HepG2 (cell line): ENCODE measurements at regions of chr2 and their contacts with region 1.

Region 1: DNA sequence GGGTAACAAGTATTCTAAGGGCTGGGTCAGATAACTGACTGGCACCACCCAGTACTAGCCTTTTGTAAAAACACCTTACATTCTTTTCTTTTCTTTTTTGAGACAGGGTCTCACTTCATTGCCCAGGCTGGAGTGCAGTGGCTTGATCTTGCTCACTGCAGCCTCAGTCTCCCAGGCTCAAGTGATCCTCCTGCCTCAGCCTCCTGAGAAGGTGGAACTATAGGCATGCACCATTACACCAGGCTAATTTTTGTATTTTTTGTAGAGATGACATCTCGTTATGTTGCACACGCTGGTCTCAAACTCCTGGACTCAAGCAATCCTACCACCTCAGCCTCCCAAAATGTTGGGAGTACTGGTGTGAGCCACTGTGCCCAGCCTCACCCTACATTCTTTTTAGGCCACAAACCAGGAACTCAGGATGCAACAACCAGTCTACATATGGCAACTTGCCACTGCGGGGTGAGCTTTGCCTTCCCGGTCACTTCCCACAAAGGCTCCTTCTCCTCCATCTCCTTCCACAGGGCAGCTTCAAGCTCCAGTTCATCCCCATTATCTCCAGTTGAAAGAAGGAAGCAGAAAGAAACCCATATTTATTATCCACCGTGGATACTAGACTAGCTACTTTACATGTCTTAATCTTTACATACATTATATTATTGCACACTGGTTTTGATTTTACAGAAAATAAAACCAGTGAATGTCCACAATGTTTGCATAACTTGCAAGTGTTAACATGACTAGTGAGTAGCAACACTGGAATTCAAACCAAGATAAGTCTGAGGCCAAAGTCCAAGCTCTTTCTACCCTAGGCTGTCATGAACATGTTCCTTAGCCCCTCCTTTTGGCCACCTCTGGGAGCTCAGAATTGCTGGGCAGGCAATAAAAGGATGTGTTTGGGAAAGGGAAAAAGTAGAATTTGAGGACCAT is 23.7 kb upstream of the AP1S3 start:
- DNase-seq: peak; percentile 97
- ATAC-seq: peak; percentile 90
- H3K4me3 ChIP-seq: no peak overlapping the region; a peak in 1 of 6 replicates
- H3K27ac ChIP-seq: peak overlapping the region; percentile 59
- H3K4me1 ChIP-seq: peaks cover 29% of the 10 kb centered on the region
- H3K27me3 ChIP-seq: no peaks in the 10 kb centered on the region
- CTCF ChIP-seq: peak; percentile 63
- EP300 ChIP-seq: peak; percentile 62 to 89; a peak in 3 of 4 replicates
- POLR2A ChIP-seq: no peak
- RAD21 ChIP-seq: no peak

Region 2: GRCh38 chr2:223674998-223675609 is 186.0 kb before region 1 on chr2:
- CTCF ChIA-PET with region 1: no interaction called
- POLR2A ChIA-PET with region 1: no interaction called
- in situ Hi-C with region 1: no loop called
- intact Hi-C with region 1: loop called (anchors 1 kb)
- DNase-seq: peak; percentile 30
- ATAC-seq: peak; percentile 96
- H3K4me3 ChIP-seq: no peak overlapping the region
- H3K27ac ChIP-seq: no peak overlapping the region
- H3K4me1 ChIP-seq: no peaks in the 10 kb centered on the region
- H3K27me3 ChIP-seq: no peaks in the 10 kb centered on the region
- CTCF ChIP-seq: peak; percentile 71
- EP300 ChIP-seq: no peak
- POLR2A ChIP-seq: no peak
- RAD21 ChIP-seq: no peak

Region 3: GRCh38 chr2:223692191-223692947 is 168.7 kb before region 1 on chr2:
- CTCF ChIA-PET with region 1: interaction called, 6 read pairs
- POLR2A ChIA-PET with region 1: no interaction called
- in situ Hi-C with region 1: no loop called
- intact Hi-C with region 1: loop called (anchors 1 kb)
- DNase-seq: peak; percentile 54
- ATAC-seq: peak; percentile 95
- H3K4me3 ChIP-seq: no peak overlapping the region
- H3K27ac ChIP-seq: no peak overlapping the region
- H3K4me1 ChIP-seq: peaks cover 16% of the 10 kb centered on the region; the same call in 1 of the 2 replicates
- H3K27me3 ChIP-seq: peaks cover 0 to 6% of the 10 kb centered on the region in 2 experiments; a peak in 2 of 5 replicates
- CTCF ChIP-seq: peak; percentile 85
- EP300 ChIP-seq: no peak
- POLR2A ChIP-seq: no peak
- RAD21 ChIP-seq: peak; percentile 61; the same call in 1 of the 2 replicates

Region 4: DNA sequence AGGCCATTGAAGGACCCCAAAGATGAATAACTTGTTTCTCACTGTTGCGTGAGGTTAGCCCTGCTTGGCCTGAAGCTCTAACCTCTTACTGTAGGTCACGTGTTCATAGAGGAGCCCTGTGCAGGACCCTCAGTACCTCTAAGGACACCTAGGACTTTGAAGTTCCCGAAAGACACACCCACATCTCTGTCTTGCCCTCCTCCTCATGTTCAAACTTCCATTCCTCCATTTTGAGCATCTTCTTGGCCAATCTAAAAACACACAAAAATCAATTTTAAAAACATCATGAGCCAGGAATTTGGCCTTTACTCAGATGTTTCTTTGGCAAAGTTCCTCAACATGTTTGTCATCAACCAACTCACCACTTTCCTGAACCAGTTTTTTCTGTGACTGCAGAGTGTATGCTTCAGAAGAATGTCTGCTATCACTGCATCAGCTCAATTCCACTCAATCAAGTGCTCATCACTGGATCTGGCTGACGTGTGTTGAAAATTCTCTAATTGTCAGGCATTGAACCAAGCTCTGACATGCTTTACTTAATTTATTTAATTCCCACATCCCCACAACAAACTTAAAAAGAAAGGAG is 125.3 kb before region 1 on chr2:
- CTCF ChIA-PET with region 1: no interaction called
- POLR2A ChIA-PET with region 1: no interaction called
- in situ Hi-C with region 1: no loop called
- intact Hi-C with region 1: no loop called
- DNase-seq: no peak
- ATAC-seq: no peak
- H3K4me3 ChIP-seq: no peak overlapping the region
- H3K27ac ChIP-seq: no peak overlapping the region
- H3K4me1 ChIP-seq: no peaks in the 10 kb centered on the region
- H3K27me3 ChIP-seq: no peaks in the 10 kb centered on the region; a peak in 1 of 5 replicates
- CTCF ChIP-seq: no peak
- EP300 ChIP-seq: no peak
- POLR2A ChIP-seq: no peak
- RAD21 ChIP-seq: no peak

Region 5: GRCh38 chr2:223779877-223780276 is 81.2 kb before region 1 on chr2:
- CTCF ChIA-PET with region 1: interaction called, 6 read pairs
- POLR2A ChIA-PET with region 1: no interaction called
- in situ Hi-C with region 1: no loop called
- intact Hi-C with region 1: loop called (anchors 1 kb)
- DNase-seq: peak; percentile 68
- ATAC-seq: peak; percentile 88
- H3K4me3 ChIP-seq: no peak overlapping the region
- H3K27ac ChIP-seq: no peak overlapping the region
- H3K4me1 ChIP-seq: no peaks in the 10 kb centered on the region
- H3K27me3 ChIP-seq: no peaks in the 10 kb centered on the region
- CTCF ChIP-seq: peak; percentile 68
- EP300 ChIP-seq: no peak
- POLR2A ChIP-seq: no peak
- RAD21 ChIP-seq: no peak

Region 6: DNA sequence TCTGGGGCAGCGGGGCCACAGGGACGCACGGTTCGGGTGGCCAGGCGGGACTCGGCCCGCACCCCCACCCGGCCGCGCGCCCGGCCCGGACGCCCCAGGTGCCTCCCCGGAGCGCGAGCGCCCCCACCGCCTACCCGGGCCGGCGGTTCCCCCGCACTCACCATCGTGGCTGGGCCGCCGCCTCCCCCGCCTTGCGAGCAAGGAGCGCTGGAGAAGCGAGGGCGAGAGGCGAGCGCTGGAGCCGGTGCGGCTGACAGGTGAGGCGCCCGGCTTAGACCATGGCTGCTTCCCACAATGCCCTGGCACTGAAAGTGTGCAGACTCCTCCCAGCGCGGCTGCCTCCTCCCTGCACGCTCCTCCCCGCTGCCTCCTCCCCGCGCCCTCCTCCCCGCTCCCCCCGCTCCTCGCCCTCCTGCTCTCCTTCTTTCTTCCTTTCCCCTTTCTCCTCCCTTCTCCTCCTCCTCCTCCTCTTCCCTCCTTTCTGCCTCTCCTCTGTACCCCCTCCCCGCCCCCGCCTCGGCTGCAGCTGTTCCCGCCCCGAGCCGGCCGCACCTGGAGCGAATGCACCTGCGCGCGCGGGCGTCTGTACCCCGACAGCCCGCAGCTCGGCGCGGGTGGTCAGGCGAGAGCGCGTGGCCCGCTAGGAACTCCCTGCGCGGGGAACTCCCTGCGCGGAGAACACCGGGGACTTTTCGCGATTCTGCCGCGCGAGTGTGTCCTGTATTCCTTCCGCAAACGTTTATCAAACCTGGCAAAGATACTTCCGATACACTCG is 23.6 kb before region 1 on chr2 and contains the start of gene AP1S3:
- CTCF ChIA-PET with region 1: interaction called, 3 read pairs
- POLR2A ChIA-PET with region 1: interaction called, 18 read pairs
- in situ Hi-C with region 1: no loop called
- intact Hi-C with region 1: loop called (anchors 2 kb)
- DNase-seq: peak; percentile 69
- ATAC-seq: peak; percentile 94
- H3K4me3 ChIP-seq: peak within 1 kb of the TSS; percentile 78 to 89 (median 79)
- H3K27ac ChIP-seq: no peak within 1 kb of the TSS
- H3K4me1 ChIP-seq: peaks cover 29% of the 10 kb centered on the region
- H3K27me3 ChIP-seq: no peaks in the 10 kb centered on the region; a peak in 1 of 5 replicates
- CTCF ChIP-seq: peak; percentile 71
- EP300 ChIP-seq: no peak
- POLR2A ChIP-seq: peak; percentile 57 to 64; a peak in 3 of 4 replicates
- RAD21 ChIP-seq: peak; percentile 76
- total RNA-seq, gene AP1S3: 16.3 and 26.3 TPM in 2 replicates

Region 7: DNA sequence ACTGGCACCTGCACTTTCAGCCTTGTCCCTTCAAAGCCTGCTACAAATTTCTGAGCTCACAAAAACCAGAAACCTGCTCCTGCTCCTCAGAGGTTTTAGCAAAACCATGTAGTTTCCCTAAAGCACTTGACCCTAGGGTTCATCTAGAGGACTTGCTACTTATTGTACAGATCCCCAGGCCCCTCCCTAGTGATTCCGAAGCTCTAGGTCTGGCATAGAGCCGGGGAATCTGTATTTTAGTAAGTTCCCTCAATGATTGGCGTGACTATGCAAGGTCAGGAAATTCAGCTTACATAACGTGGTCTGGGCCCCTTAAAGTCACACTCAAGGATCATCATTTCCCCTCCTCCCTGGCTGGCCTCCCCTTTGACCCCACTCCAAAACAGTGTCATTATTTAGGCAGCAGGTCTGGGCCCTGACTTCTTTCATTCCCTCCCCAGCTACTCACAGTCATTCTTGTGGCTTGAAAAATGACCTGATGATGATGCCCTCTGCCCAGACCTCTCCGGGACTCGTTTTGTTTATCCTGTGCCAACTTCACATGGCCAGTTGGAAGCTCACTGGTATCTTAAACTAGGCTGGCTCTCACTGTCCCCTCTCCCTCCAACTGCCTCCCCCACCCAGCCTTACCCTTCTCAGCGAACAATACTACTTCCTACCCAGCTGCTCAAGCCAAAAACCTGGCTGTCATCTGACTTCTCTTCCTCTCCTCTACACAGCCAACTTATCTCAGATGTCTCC is 48.1 kb after region 1 on chr2:
- CTCF ChIA-PET with region 1: no interaction called
- POLR2A ChIA-PET with region 1: interaction called, 13 read pairs
- in situ Hi-C with region 1: no loop called
- intact Hi-C with region 1: no loop called
- DNase-seq: peak; percentile 50
- ATAC-seq: peak; percentile 4
- H3K4me3 ChIP-seq: peak overlapping the region in 2 of 3 experiments; percentile 10 to 32; a peak in 3 of 6 replicates
- H3K27ac ChIP-seq: peak overlapping the region; percentile 66
- H3K4me1 ChIP-seq: peaks cover 40% of the 10 kb centered on the region
- H3K27me3 ChIP-seq: no peaks in the 10 kb centered on the region
- CTCF ChIP-seq: no peak
- EP300 ChIP-seq: no peak; a peak in 1 of 4 replicates
- POLR2A ChIP-seq: no peak
- RAD21 ChIP-seq: no peak